Dorsolateral prefrontal cortex (tissue), 120 donors: ENCODE measurements at regions of chr16 and their contacts with region 1.

Region 1: GRCh38 chr16:3542601-3543373 is 34.4 kb downstream of the NLRC3 start:
- DNase-seq: no peak
- H3K4me3 ChIP-seq: no peak overlapping the region
- H3K27ac ChIP-seq: no peak overlapping the region
- H3K27me3 ChIP-seq: no peaks in the 10 kb centered on the region
- CTCF ChIP-seq: no peak

Region 2: GRCh38 chr16:3514621-3515020 is 28.2 kb before region 1 on chr16:
- intact Hi-C with region 1: loop called in 1 of 2 experiments (anchors 2 kb)
- DNase-seq: no peak
- H3K4me3 ChIP-seq: no peak overlapping the region
- H3K27ac ChIP-seq: no peak overlapping the region
- H3K27me3 ChIP-seq: no peaks in the 10 kb centered on the region
- CTCF ChIP-seq: no peak